Activated B cell treated with CpG ODN at 0.5 μM for 24 hours (primary cell): ENCODE measurements at regions of chr3 and their contacts with region 1.

Region 1: DNA sequence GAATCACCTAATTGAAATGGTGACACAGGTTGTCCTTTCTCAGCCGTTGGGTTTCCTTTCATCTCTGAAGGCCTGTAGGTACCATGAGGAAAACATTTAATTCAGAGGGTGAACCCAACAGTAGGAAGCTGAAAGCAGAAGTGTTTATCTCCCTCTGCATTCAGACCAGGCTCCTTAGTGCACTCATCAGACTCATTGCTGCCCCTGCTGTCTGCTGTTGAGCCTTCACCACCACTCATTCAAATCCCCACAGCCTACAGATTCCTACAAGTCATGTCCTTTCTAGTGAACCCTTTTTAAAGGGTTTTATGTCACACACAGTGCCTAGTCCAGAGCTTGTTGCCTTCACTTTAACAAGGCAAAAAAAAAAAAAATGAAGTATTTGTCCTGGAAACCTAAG is 13.4 kb downstream of the WDR48 start:
- DNase-seq: no peak
- ATAC-seq: peak; percentile 99
- H3K4me3 Mint-ChIP-seq: no peak overlapping the region
- H3K27ac Mint-ChIP-seq: peak overlapping the region; percentile 69
- H3K4me1 Mint-ChIP-seq: peaks cover 17% of the 10 kb centered on the region
- H3K27me3 Mint-ChIP-seq: no peaks in the 10 kb centered on the region
- CTCF ChIP-seq: no peak

Region 2: DNA sequence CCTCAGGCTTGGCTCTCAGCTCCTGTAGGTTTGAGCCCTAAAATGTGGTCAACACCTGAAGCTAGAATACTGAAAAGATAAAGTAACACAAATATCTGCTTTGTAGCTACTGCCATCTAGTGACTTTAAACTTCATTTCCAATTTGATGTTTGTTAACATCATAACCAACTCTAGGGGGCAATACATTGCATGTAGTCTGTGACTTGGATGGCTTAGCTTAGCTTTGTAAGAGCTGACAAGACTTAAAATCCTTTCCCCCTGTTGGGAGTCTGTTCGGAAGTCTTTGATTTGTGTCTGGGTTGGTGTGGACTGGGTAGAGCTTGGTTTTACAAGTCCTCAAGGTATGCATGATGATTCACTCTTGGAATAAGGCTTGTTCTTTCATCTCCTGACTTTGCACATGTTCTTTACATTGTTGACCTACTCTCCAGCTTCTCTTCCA is 65.2 kb before region 1 on chr3:
- CTCF ChIA-PET with region 1: interaction called, 5 read pairs
- POLR2A ChIA-PET with region 1: interaction called, 12 read pairs
- intact Hi-C with region 1: no loop called
- DNase-seq: no peak
- ATAC-seq: no peak
- H3K4me3 Mint-ChIP-seq: no peak overlapping the region
- H3K27ac Mint-ChIP-seq: no peak overlapping the region
- H3K4me1 Mint-ChIP-seq: no peaks in the 10 kb centered on the region
- H3K27me3 Mint-ChIP-seq: peaks cover 13% of the 10 kb centered on the region
- CTCF ChIP-seq: no peak

Region 3: GRCh38 chr3:39025222-39025970 is 39.8 kb before region 1 on chr3:
- CTCF ChIA-PET with region 1: interaction called, 5 read pairs
- POLR2A ChIA-PET with region 1: no interaction called
- intact Hi-C with region 1: loop called (anchors 1 kb)
- DNase-seq: no peak
- ATAC-seq: no peak
- H3K4me3 Mint-ChIP-seq: no peak overlapping the region
- H3K27ac Mint-ChIP-seq: no peak overlapping the region
- H3K4me1 Mint-ChIP-seq: no peaks in the 10 kb centered on the region
- H3K27me3 Mint-ChIP-seq: peaks cover 7% of the 10 kb centered on the region
- CTCF ChIP-seq: no peak